B cell (primary cell): ENCODE measurements at regions of chr18 and their contacts with region 1.

Region 1: DNA sequence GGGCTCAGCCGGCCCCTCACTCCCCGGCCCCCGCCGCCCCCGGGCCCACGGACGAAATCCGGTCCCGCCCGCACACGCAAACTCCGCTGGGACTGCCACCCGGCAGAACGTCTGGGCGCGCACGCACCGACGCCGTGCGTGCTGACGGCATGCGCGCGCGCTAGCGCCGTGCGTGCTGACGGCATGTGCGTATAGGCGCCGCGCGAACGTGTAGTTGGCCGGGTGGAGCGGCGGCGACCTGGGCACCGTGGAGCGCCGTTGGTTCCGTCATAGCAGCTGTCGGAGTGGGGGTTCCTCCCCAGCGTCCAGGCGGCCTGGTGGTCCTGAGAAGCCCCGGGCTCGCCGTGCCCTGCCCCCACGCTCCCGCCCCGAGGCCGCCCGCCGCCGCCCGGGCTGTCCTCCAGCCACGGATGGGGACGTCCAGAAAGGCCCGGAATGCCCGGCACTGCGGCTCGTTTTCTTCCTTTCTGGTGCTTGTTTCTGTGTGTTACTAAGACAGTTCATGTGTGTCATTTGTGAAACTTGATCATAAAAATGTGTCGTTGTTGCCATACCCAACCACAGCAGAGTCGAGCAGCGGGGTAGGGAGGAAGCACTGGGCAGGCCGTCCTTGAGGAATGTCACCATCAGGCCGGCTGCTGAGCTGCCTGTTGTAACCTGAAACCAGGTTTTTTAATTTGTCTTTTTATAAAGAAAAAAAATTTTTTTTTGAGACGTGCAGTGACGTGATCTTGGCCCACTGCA is at the start of gene TXNL4A:
- DNase-seq: peak; percentile 92
- ATAC-seq: peak; percentile 92
- H3K4me3 ChIP-seq: peak within 1 kb of the TSS; percentile 75 to 91 (median 89)
- H3K4me3 Mint-ChIP-seq: peak within 1 kb of the TSS; percentile 89
- H3K27ac ChIP-seq: peak within 1 kb of the TSS; percentile 87 to 94
- H3K27ac Mint-ChIP-seq: peak within 1 kb of the TSS; percentile 94
- H3K4me1 ChIP-seq: peaks cover 15 to 23% of the 10 kb centered on the region in 2 donors
- H3K4me1 Mint-ChIP-seq: peaks cover 32% of the 10 kb centered on the region
- H3K27me3 ChIP-seq: no peaks in the 10 kb centered on the region
- H3K27me3 Mint-ChIP-seq: no peaks in the 10 kb centered on the region
- CTCF ChIP-seq: no peak
- total RNA-seq, gene TXNL4A: 63.9 and 67.8 TPM in 2 replicates

Region 2: DNA sequence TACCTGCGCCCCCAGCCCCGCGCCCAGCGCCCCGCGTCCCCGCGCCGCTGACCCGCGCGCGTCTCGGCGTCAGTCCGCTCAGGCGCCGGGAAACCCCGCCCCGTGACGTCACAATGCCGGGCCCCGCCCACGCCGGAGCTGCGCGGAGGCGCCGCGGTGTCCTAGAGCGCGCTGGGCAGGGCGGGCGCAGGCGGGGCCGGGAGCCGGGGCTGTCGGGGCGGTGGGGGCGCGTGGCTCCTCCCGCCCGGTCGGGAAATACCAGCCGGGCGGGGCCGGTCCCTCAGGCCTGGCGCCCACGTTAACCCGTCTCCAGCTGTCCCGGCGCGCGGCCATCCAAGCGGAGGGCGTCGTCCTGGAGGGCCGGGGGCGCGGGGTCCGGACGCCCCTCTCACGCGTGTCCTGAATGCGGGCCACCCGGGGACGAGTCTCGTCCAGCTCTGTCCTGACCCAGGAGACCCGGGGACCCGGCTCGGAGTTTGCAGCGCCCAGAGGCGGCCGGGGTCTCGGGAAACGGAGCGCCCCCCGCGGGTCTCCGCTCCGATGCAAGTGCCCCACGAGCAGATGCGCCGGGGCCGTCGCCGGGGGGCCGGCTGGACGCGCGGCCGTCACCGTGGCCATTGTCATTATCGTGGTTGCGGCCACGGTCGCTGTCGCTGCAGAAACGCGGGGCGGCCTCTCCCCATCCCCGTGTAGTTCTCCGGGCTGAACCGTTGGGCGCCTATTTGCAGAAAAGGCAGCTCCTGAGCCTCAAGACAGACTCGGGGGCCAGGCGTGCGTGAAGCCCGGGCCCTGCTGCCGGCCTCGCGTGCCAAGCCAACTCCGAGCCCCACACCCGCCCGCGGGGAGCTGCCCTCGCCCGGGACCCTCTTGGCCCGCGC is 36.8 kb before region 1 on chr18 and contains the start of gene SLC66A2:
- CTCF ChIA-PET with region 1: interaction called, 4 read pairs
- POLR2A ChIA-PET with region 1: no interaction called
- intact Hi-C with region 1: loop called (anchors 1 kb)
- DNase-seq: peak; percentile 92
- ATAC-seq: peak; percentile 83
- H3K4me3 ChIP-seq: peak within 1 kb of the TSS; percentile 58 to 73 (median 70)
- H3K4me3 Mint-ChIP-seq: peak within 1 kb of the TSS; percentile 92
- H3K27ac ChIP-seq: peak within 1 kb of the TSS; percentile 54 to 83
- H3K27ac Mint-ChIP-seq: peak within 1 kb of the TSS; percentile 84
- H3K4me1 ChIP-seq: peaks cover 17 to 37% of the 10 kb centered on the region in 2 donors
- H3K4me1 Mint-ChIP-seq: peaks cover 34% of the 10 kb centered on the region
- H3K27me3 ChIP-seq: no peaks in the 10 kb centered on the region
- H3K27me3 Mint-ChIP-seq: no peaks in the 10 kb centered on the region
- CTCF ChIP-seq: no peak
- total RNA-seq, gene SLC66A2: 44.4 and 45.6 TPM in 2 replicates

Region 3: DNA sequence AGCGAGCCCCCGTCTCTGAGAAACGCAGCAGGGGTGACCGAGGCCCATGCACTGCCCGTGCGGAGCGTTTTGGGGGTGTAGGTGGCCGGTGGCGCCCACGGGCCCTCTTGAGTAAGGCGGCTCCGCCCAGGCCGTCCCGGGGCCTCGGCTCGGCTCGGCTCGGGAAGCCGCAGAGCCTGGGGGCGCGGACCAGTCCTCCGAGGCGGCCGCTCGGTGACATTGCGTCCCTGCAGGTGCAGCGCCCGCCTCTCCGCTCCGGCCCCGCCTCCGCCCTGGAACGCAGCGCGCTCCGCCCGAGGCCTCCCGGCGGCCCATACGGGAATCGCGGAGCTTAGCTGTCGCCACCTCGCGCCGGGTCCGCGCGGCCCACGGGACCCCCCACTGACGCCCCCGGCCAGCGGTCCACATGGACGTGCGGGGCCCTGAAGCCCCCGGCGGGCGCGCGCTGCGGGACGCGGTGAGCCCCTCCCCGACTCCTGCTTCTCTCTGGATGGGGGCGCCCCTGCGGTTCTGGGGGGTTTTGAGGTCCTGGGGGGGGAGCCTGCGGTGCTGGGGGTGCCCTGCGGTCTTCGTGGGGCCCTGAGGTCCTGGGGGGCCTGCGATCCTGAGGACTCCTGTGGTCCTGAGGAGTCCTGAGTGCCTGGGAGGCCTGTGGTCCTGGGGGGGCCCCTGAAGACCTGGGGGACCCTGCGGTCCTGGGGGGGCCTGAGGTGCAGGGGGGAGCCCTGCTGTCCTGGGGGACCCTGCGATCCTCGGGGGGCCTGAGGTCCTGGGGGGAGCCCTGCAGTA is 24.1 kb before region 1 on chr18 and contains the start of gene HSBP1L1:
- CTCF ChIA-PET with region 1: interaction called, 3 read pairs
- POLR2A ChIA-PET with region 1: no interaction called
- intact Hi-C with region 1: loop called (anchors 1 kb)
- DNase-seq: peak; percentile 76
- ATAC-seq: peak; percentile 90
- H3K4me3 ChIP-seq: peak within 1 kb of the TSS in 4 of 5 experiments; percentile 37 to 63 (median 56)
- H3K4me3 Mint-ChIP-seq: peak within 1 kb of the TSS; percentile 74
- H3K27ac ChIP-seq: peak within 1 kb of the TSS in 1 of 2 donors; percentile 41
- H3K27ac Mint-ChIP-seq: peak within 1 kb of the TSS; percentile 77
- H3K4me1 ChIP-seq: peaks cover 23 to 41% of the 10 kb centered on the region in 2 donors
- H3K4me1 Mint-ChIP-seq: peaks cover 39% of the 10 kb centered on the region
- H3K27me3 ChIP-seq: peaks cover 0 to 6% (median 0%) of the 10 kb centered on the region in 4 experiments
- H3K27me3 Mint-ChIP-seq: no peaks in the 10 kb centered on the region
- CTCF ChIP-seq: peak; percentile 23
- total RNA-seq, gene HSBP1L1: 4.8 and 7.2 TPM in 2 replicates

Region 4: GRCh38 chr18:80006724-80007123 is 18.1 kb after region 1 on chr18:
- CTCF ChIA-PET with region 1: no interaction called
- POLR2A ChIA-PET with region 1: no interaction called
- intact Hi-C with region 1: no loop called
- DNase-seq: no peak
- ATAC-seq: no peak
- H3K4me3 ChIP-seq: no peak overlapping the region
- H3K4me3 Mint-ChIP-seq: no peak overlapping the region
- H3K27ac ChIP-seq: no peak overlapping the region
- H3K27ac Mint-ChIP-seq: no peak overlapping the region
- H3K4me1 ChIP-seq: no peaks in the 10 kb centered on the region
- H3K4me1 Mint-ChIP-seq: peaks cover 7% of the 10 kb centered on the region
- H3K27me3 ChIP-seq: no peaks in the 10 kb centered on the region
- H3K27me3 Mint-ChIP-seq: no peaks in the 10 kb centered on the region
- CTCF ChIP-seq: no peak

Region 5: DNA sequence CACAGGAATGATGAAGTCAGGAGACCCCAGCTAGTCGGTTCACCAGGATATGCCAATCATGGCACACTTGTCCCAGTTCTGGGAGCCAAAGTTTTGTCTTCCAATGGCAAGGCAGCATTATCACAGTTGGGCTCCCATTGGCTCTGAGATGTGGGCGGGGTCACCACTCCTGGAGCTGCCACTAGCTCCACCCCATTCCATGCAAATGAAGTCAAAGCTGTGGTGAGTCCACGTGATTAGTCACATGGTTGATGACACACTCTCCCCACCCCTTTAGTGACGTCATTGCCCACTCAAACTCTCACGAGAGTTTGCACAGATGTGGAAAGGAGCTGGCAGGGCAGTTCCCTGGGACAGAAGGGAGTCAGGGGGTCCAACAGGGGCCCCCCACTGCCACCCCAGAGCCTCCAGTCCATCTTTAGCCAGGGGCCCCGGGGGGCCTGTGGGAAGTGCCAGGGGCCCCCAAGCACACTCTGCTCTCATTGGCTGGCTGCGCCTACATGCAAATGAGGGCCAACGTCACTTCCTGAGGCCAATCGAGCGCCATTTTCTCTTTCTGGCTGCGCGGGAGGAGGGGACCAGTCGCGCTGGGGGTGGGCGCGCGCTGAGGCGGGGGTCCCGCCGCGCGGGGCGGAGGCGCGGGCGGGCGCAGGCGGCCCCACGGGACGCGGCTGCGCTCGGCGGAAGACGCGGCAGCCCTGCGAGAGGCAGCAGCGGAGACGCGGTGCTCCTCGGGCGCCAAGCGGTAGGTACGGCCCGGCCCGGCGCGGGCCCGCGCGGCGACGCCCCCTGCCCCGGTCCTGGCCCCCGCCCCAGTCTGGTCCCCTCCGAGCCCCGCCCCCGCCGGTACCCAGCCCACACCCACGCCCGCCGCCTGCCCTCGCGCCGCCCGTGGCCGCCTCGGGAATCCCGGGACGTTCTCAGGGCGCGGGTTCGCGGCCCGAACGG is 120.4 kb after region 1 on chr18 and contains the start of gene ADNP2:
- CTCF ChIA-PET with region 1: no interaction called
- POLR2A ChIA-PET with region 1: no interaction called
- intact Hi-C with region 1: loop called (anchors 1 kb)
- DNase-seq: peak; percentile 95
- ATAC-seq: peak; percentile 66
- H3K4me3 ChIP-seq: peak within 1 kb of the TSS; percentile 27 to 78 (median 62)
- H3K4me3 Mint-ChIP-seq: peak within 1 kb of the TSS; percentile 84
- H3K27ac ChIP-seq: peak within 1 kb of the TSS; percentile 84 to 85
- H3K27ac Mint-ChIP-seq: peak within 1 kb of the TSS; percentile 90
- H3K4me1 ChIP-seq: peaks cover 28 to 41% of the 10 kb centered on the region in 2 donors
- H3K4me1 Mint-ChIP-seq: peaks cover 48% of the 10 kb centered on the region
- H3K27me3 ChIP-seq: no peaks in the 10 kb centered on the region
- H3K27me3 Mint-ChIP-seq: no peaks in the 10 kb centered on the region
- CTCF ChIP-seq: no peak
- total RNA-seq, gene ADNP2: 14.7 and 16.1 TPM in 2 replicates